IMR-90 (cell line): ENCODE measurements at regions of chr1 and their contacts with region 1.

Region 1: GRCh38 chr1:244302889-244303613 is 148.7 kb downstream of the ADSS2 start:
- DNase-seq: peak; percentile 54
- ATAC-seq: peak; percentile 66
- H3K4me3 ChIP-seq: no peak overlapping the region
- H3K27ac ChIP-seq: no peak overlapping the region
- H3K4me1 ChIP-seq: no peaks in the 10 kb centered on the region
- H3K27me3 ChIP-seq: no peaks in the 10 kb centered on the region
- CTCF ChIP-seq: no peak
- POLR2A ChIP-seq: no peak
- RAD21 ChIP-seq: no peak

Region 2: DNA sequence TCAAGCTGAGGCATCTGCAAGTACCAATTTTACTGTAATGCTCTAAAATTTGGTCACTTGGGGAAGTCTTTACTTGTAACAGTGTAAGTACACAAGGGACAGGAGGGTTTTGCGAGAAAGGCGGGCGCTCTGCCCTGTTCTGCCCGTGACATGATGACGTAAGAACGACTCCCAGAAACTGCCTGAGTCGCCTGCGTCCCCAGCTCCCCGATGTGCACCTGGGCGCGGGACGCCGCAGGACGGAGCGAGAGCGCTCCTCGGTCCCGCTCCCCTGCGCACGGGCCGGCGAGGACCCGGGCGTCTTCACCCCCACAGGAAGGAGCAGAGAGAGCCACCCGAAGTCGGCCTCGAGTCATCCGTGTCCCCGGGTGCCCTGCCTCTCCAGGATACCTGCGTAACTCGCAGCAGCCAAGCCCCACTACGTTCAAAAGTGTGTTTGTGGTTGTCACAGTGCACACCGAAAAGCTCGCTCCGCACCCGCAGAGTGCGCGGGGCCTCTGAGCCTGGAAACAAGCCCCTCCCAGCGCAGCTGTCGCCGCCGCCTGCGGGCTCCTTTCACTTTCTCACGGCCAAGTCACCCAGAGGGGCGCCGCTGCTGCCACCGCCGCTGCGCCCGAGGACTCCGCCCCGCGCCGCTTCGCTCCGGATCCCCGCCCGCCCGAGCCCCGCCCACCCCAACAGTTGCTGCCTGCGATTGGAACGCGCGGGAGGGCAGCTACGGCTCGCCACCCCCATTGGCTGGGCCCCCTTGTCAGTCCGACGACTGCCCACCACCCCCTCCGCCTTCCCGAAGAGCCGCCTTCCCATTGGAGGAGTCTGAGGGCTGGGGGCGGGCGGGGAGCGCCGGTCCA is 255.2 kb before region 1 on chr1:
- CTCF ChIA-PET with region 1: no interaction called
- POLR2A ChIA-PET with region 1: no interaction called
- dilution Hi-C with region 1: no loop called
- in situ Hi-C with region 1: no loop called
- intact Hi-C with region 1: no loop called
- DNase-seq: peak; percentile 99
- ATAC-seq: peak; percentile 97
- H3K4me3 ChIP-seq: peak overlapping the region; percentile 96
- H3K27ac ChIP-seq: peak overlapping the region; percentile 80
- H3K4me1 ChIP-seq: peaks cover 2% of the 10 kb centered on the region; the same call in 1 of the 2 replicates
- H3K27me3 ChIP-seq: peaks cover 6% of the 10 kb centered on the region
- CTCF ChIP-seq: no peak
- POLR2A ChIP-seq: peak; percentile 59; the same call in 1 of the 2 replicates
- RAD21 ChIP-seq: no peak

Region 3: DNA sequence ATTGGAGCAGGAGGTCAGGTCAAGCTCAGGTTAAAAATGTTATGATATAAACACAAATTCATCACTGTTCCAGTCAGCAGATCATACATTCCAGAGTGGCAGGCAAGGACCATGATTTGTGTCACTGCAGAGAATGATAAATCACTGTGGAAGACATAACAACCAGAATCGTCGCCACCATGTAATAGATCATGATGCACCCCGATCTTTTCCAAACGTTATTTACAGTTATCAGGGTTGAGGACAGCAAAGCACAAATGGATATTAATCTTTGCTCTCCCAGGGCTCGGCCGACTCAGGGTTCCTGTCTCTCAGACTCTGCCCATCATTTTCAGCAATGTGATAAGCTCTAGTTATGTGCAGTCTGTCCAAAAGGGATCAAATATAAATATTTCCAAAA is 129.3 kb before region 1 on chr1:
- CTCF ChIA-PET with region 1: no interaction called
- POLR2A ChIA-PET with region 1: no interaction called
- dilution Hi-C with region 1: no loop called
- in situ Hi-C with region 1: no loop called
- intact Hi-C with region 1: no loop called
- DNase-seq: no peak
- ATAC-seq: no peak
- H3K4me3 ChIP-seq: no peak overlapping the region
- H3K27ac ChIP-seq: no peak overlapping the region
- H3K4me1 ChIP-seq: peaks cover 5% of the 10 kb centered on the region
- H3K27me3 ChIP-seq: no peaks in the 10 kb centered on the region
- CTCF ChIP-seq: no peak
- POLR2A ChIP-seq: no peak
- RAD21 ChIP-seq: no peak

Region 4: GRCh38 chr1:244451951-244452795 is 149.1 kb after region 1 on chr1:
- CTCF ChIA-PET with region 1: no interaction called
- POLR2A ChIA-PET with region 1: no interaction called
- dilution Hi-C with region 1: no loop called
- in situ Hi-C with region 1: no loop called
- intact Hi-C with region 1: loop called (anchors 1 kb)
- DNase-seq: peak; percentile 99
- ATAC-seq: peak; percentile 96
- H3K4me3 ChIP-seq: peak overlapping the region; percentile 16
- H3K27ac ChIP-seq: no peak overlapping the region
- H3K4me1 ChIP-seq: peaks cover 8% of the 10 kb centered on the region
- H3K27me3 ChIP-seq: no peaks in the 10 kb centered on the region
- CTCF ChIP-seq: peak; percentile 61
- POLR2A ChIP-seq: peak; percentile 7; the same call in 1 of the 2 replicates
- RAD21 ChIP-seq: peak; percentile 46